ENCODE measurements at regions of chr1 and their contacts with region 1.

Region 1: GRCh38 chr1:44799770-44800584 is at the start of gene PLK3:
- DNase-seq: peak; percentile 94 to 99
- H3K4me3 ChIP-seq: peak within 1 kb of the TSS; percentile 85 to 91
- H3K27ac ChIP-seq: peak within 1 kb of the TSS; percentile 96 to 99
- H3K4me1 ChIP-seq: peaks cover 18 to 32% of the 10 kb centered on the region in 2 donors
- H3K27me3 ChIP-seq: no peaks in the 10 kb centered on the region
- CTCF ChIP-seq: peak; percentile 92 to 95 (median 94)
- total RNA-seq, gene PLK3: 107 TPM

Region 2: DNA sequence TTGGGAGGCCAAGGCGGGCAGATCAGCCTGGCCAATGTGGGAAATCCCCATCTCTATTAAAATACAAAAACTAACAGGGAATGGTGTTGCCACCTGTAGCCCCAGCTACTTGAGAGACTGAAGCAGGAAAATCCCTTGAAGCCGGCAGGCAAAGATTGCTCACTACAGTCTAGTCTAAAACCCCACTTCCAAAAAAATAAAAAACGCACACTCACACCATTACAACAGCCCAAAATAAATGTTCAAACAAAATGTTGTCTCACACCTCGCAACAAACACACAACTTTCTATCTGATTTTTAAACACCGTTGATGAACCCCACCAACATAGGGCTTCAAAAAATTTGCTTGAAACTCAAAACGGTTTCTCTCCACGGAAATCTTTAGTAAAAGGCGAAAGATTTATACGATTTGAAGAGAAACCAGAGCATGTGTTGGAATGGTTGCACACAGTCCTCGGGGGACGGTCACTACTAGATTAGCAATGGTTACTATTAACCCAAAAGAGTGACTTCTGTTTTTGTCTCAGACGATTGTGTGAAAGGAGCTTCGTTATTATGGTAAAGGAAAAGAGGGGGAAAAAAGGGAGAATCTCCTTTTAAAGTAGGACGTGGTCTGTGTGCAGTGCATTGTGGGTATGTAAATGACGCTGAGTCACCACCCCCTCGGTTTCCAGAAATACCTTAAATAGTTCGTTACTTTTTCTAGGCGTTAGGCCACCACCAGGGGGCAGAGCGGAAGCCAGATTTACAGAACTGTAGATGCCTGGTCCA is 69.0 kb before region 1 on chr1 and contains the start of gene RNU5D-1:
- intact Hi-C with region 1: loop called (anchors 2 kb)
- DNase-seq: peak; percentile 81 to 98
- H3K4me3 ChIP-seq: peak within 1 kb of the TSS in 1 of 2 donors; percentile 31
- H3K27ac ChIP-seq: peak within 1 kb of the TSS; percentile 84 to 92
- H3K4me1 ChIP-seq: peaks cover 5 to 15% of the 10 kb centered on the region in 2 donors
- H3K27me3 ChIP-seq: no peaks in the 10 kb centered on the region
- CTCF ChIP-seq: peak; percentile 70 to 76 (median 72)
- total RNA-seq, gene RNU5D-1: not detected

Region 3: GRCh38 chr1:44747878-44748277 is 52.1 kb before region 1 on chr1:
- intact Hi-C with region 1: no loop called
- DNase-seq: no peak
- H3K4me3 ChIP-seq: no peak overlapping the region
- H3K27ac ChIP-seq: no peak overlapping the region
- H3K4me1 ChIP-seq: no peaks in the 10 kb centered on the region
- H3K27me3 ChIP-seq: no peaks in the 10 kb centered on the region
- CTCF ChIP-seq: no peak

Region 4: GRCh38 chr1:44819608-44820327 is 19.8 kb after region 1 on chr1:
- intact Hi-C with region 1: loop called (anchors 2 kb)
- DNase-seq: peak in 1 of 2 donors; percentile 95
- H3K4me3 ChIP-seq: peak overlapping the region; percentile 66
- H3K27ac ChIP-seq: peak overlapping the region; percentile 77 to 95
- H3K4me1 ChIP-seq: peaks cover 0 to 20% of the 10 kb centered on the region in 2 donors
- H3K27me3 ChIP-seq: no peaks in the 10 kb centered on the region
- CTCF ChIP-seq: peak in 1 of 3 experiments; percentile 16

Region 5: DNA sequence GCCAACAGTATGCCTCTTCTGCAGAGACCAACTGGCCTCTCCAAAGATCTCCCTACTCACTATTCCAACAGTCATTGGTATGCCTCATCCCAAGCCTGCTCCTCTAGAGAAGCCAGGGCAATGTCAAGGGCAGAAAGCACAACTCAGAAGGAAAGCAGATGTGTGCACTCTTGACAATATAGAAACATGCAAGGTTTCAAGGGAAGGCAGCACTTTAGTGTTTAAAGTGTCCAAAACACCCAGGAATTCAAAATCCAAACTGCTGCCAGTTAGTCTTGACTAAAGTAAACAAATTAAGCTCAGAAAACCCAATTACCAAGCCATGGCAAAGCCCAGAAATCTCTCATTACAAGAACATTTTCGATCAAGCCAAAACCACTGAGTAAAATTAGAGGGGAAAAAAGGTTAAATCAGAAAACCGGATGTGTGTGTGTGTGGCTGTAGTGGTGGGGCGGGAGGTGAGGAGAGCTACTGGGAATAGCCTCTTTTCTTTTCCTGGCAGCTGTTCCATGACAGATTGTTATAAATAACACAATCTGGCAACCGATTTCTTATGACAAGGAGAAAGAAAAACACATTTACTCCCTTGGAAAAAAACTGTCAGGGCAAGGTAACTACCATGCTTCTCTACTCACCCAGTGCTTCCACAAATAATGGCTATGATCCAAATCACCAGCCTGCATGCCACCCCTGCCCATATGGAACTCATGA is 147.2 kb after region 1 on chr1:
- intact Hi-C with region 1: loop called (anchors 5 kb)
- DNase-seq: peak in 1 of 2 donors; percentile 74
- H3K4me3 ChIP-seq: peak overlapping the region; percentile 16 to 24
- H3K27ac ChIP-seq: peak overlapping the region; percentile 82 to 86
- H3K4me1 ChIP-seq: peaks cover 13 to 34% of the 10 kb centered on the region in 2 donors
- H3K27me3 ChIP-seq: no peaks in the 10 kb centered on the region
- CTCF ChIP-seq: no peak

Measured in ascending aorta (tissue), 2 donors.